Calu3 (cell line): ENCODE measurements at regions of chr1 and their contacts with region 1.

Region 1: GRCh38 chr1:95169544-95169943 is 52.4 kb downstream of the TLCD4 start:
- DNase-seq: peak; percentile 73
- H3K4me3 Mint-ChIP-seq: peak overlapping the region; percentile 53
- H3K27ac Mint-ChIP-seq: peak overlapping the region; percentile 77
- H3K4me1 Mint-ChIP-seq: peaks cover 52% of the 10 kb centered on the region
- H3K27me3 Mint-ChIP-seq: no peaks in the 10 kb centered on the region
- CTCF ChIP-seq: no peak

Region 2: GRCh38 chr1:94658221-94658620 is 511.3 kb before region 1 on chr1:
- CTCF ChIA-PET with region 1: no interaction called
- intact Hi-C with region 1: no loop called
- DNase-seq: no peak
- H3K4me3 Mint-ChIP-seq: no peak overlapping the region
- H3K27ac Mint-ChIP-seq: peak overlapping the region; percentile 74
- H3K4me1 Mint-ChIP-seq: peaks cover 60% of the 10 kb centered on the region
- H3K27me3 Mint-ChIP-seq: no peaks in the 10 kb centered on the region
- CTCF ChIP-seq: no peak

Region 3: GRCh38 chr1:94926915-94927404 is 242.6 kb before region 1 on chr1 and contains the start of gene CNN3:
- CTCF ChIA-PET with region 1: no interaction called
- intact Hi-C with region 1: no loop called
- DNase-seq: peak; percentile 95
- H3K4me3 Mint-ChIP-seq: peak within 1 kb of the TSS; percentile 98
- H3K27ac Mint-ChIP-seq: peak within 1 kb of the TSS; percentile 86
- H3K4me1 Mint-ChIP-seq: peaks cover 51% of the 10 kb centered on the region
- H3K27me3 Mint-ChIP-seq: no peaks in the 10 kb centered on the region
- CTCF ChIP-seq: no peak
- total RNA-seq, gene CNN3: 83.4 and 140 TPM in 2 replicates

Region 4: DNA sequence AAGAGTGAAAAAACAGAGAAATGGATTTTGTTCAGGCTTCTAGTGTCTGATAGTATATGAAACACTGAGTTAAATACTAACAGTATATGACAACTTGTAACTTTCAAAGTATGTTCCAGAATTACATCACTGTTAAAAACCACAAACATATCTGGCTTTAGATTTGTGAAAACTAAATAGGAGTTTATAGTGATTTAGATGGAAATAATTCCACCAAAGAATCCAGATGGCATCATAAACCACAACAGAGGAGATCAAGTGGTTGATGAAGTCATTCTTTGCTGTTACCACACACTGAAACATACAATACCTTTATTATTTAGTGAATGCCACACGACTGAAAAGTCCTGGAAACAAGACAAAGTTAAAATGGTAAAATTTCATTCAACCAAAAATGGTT is 134.0 kb before region 1 on chr1:
- CTCF ChIA-PET with region 1: no interaction called
- intact Hi-C with region 1: no loop called
- DNase-seq: no peak
- H3K4me3 Mint-ChIP-seq: no peak overlapping the region
- H3K27ac Mint-ChIP-seq: no peak overlapping the region
- H3K4me1 Mint-ChIP-seq: peaks cover 10% of the 10 kb centered on the region
- H3K27me3 Mint-ChIP-seq: no peaks in the 10 kb centered on the region
- CTCF ChIP-seq: no peak

Region 5: GRCh38 chr1:95226781-95227660 is 57.5 kb after region 1 on chr1:
- CTCF ChIA-PET with region 1: no interaction called
- intact Hi-C with region 1: loop called (anchors 1 kb)
- DNase-seq: no peak
- H3K4me3 Mint-ChIP-seq: peak overlapping the region; percentile 59
- H3K27ac Mint-ChIP-seq: peak overlapping the region; percentile 99
- H3K4me1 Mint-ChIP-seq: peaks cover 54% of the 10 kb centered on the region
- H3K27me3 Mint-ChIP-seq: no peaks in the 10 kb centered on the region
- CTCF ChIP-seq: no peak

Region 6: GRCh38 chr1:96028071-96028470 is 858.5 kb after region 1 on chr1:
- CTCF ChIA-PET with region 1: no interaction called
- intact Hi-C with region 1: no loop called
- DNase-seq: no peak
- H3K4me3 Mint-ChIP-seq: no peak overlapping the region
- H3K27ac Mint-ChIP-seq: no peak overlapping the region
- H3K4me1 Mint-ChIP-seq: no peaks in the 10 kb centered on the region
- H3K27me3 Mint-ChIP-seq: no peaks in the 10 kb centered on the region
- CTCF ChIP-seq: no peak